Activated T-helper 2 cell treated with anti-CD3 and anti-CD28 coated beads, Interferon-gamma antibody, Interleukin-2, Interleukin-4, amounts not matched to agents 10 μg/mL and 5 μg/mL and 100 μg/mL, durations not matched to agents 14 hours and 24 hours and 36 hours (primary cell): ENCODE measurements at regions of chr6 and their contacts with region 1.

Region 1: DNA sequence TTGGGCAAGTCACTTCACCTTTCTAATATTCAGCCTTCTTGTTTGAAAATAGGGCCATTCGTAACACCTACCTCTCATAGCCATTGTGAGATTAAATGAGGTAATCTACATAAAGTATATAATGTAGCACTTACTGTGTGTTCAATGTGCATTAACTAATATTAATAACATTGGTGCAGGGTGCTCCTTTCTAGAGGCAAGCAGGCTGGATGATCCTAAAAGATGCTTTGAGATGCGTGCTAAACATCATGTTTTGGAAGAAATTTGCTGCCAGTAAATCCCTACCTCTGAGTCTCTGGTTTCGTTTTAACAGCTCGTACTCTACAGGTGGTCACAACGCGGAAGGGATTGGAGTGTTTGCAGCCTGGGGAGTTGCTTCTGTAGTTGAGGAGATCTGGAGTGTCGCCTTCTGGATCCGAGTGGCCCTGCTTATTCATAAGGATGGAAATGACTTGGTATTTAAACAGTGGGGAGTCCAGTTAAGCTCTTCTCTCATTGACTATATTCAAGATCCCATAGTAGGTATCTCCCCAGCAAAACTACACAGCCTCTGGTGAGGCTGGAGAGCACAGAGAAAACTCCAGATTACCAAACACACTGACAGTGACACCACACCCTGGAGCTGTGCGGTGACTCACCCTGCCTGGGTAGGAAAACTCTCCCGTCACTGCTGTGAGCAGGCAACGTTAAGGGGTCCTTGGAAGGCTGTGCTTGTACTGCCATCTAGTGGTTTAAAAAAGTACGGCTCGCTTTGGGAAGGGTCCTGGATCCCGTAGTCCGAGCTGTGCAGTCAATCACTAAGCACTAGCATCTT is 107.9 kb downstream of the MAP3K7 start:
- DNase-seq: peak; percentile 75
- H3K4me3 Mint-ChIP-seq: peak overlapping the region; percentile 17
- H3K27ac Mint-ChIP-seq: peak overlapping the region; percentile 67
- H3K4me1 Mint-ChIP-seq: peaks cover 58% of the 10 kb centered on the region
- H3K27me3 Mint-ChIP-seq: no peaks in the 10 kb centered on the region

Region 2: DNA sequence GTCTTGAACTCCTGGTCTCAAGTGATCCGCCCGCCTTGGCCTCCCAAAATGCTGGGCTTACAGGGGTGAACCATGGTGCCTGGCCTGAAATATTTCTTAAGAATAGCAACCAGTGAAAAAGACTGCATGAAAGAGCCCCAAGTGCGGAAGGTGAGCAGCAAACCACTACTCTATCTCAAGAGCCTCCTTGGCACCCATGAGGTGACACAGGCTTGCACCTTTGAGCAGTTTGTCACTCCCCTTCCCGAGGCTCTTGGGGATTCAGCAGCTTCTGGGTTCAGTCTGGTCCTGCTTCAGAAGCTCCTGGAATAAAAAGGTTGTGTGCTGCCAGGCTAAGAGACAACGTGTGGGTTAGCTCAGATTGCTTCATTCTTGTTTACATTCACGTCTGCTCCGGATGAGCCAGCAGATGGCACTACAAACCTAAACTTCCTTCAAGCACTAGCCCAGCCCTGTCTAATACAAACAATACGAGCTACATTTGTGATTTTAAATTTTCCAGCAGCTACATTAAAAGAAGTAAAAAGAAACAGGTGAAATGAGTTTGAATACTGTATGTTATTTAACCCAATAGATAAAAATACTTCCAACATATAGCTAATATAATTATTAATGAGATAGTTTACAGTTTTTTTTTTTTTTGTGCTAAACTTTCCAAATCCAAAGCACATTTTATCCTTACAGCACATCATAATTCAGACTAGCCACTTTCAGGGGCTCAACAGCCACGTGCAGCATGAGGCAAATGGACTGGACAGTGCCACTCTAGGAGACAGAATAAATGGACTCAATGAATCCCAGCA is 538.6 kb before region 1 on chr6:
- intact Hi-C with region 1: loop called (anchors 1 kb)
- DNase-seq: peak; percentile 59
- H3K4me3 Mint-ChIP-seq: no peak overlapping the region
- H3K27ac Mint-ChIP-seq: no peak overlapping the region
- H3K4me1 Mint-ChIP-seq: peaks cover 38% of the 10 kb centered on the region
- H3K27me3 Mint-ChIP-seq: no peaks in the 10 kb centered on the region

Region 3: GRCh38 chr6:90025523-90026061 is 453.4 kb before region 1 on chr6:
- intact Hi-C with region 1: loop called (anchors 5 kb)
- DNase-seq: no peak
- H3K4me3 Mint-ChIP-seq: peak overlapping the region; percentile 72
- H3K27ac Mint-ChIP-seq: peak overlapping the region; percentile 92
- H3K4me1 Mint-ChIP-seq: peaks cover 71% of the 10 kb centered on the region
- H3K27me3 Mint-ChIP-seq: no peaks in the 10 kb centered on the region

Region 4: DNA sequence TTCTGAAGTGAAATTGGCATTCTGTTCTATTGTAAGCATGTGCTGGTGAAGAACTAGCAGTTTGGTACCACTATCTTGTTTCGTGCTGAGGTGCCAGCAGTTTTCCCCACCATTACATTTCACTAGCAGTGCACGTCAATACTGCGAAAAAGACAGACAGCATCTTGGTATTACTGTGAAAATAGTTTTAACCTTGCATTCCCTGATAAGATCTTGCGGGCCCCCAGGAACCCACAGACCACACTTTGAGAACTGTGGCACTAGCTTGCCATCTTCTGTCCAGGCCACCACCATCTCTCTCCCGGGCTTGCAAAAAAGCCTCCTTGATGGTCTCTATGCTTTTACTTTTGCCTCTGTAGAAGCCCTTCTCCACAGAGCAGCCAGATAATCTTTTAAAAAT is 368.0 kb before region 1 on chr6:
- intact Hi-C with region 1: loop called (anchors 2 kb)
- DNase-seq: peak; percentile 76
- H3K4me3 Mint-ChIP-seq: peak overlapping the region; percentile 0
- H3K27ac Mint-ChIP-seq: peak overlapping the region; percentile 68
- H3K4me1 Mint-ChIP-seq: peaks cover 69% of the 10 kb centered on the region
- H3K27me3 Mint-ChIP-seq: no peaks in the 10 kb centered on the region

Region 5: DNA sequence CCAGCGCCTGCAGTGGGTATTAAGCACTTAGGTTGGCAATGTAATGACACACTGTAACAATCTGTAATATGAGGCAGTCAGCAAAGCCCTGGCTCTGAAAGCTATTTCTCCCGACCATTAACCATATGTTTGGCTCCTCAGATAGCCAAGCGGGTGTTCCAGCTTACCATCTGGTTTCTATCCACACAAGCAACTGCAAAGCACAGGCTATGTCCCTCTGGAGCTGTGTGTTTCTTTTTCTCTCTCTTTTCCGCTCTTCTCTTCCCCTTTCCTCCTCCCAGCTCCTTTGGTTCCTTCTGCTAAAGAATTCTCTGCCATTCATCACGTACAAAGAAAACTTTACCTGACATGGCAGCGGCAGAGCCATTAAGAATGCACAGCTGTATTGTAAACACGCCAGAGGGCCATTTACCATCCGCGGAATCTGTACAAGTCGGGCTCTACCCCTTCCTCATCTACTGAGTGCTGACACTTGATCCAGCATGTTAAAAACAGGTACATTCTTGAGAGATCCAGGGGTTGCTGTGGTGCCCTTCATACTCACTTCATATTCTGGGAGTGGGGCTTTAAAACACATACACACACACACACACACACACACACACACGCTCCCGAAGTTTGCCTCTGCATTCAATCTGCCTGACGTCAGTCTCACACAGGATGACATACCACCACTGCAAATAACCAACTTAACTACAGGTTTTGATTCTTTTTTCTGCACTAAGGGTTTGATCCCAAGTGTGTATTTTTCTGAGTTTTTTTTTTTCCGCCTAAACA is 259.6 kb before region 1 on chr6:
- intact Hi-C with region 1: no loop called
- DNase-seq: no peak
- H3K4me3 Mint-ChIP-seq: no peak overlapping the region
- H3K27ac Mint-ChIP-seq: no peak overlapping the region
- H3K4me1 Mint-ChIP-seq: peaks cover 25% of the 10 kb centered on the region
- H3K27me3 Mint-ChIP-seq: no peaks in the 10 kb centered on the region

Region 6: DNA sequence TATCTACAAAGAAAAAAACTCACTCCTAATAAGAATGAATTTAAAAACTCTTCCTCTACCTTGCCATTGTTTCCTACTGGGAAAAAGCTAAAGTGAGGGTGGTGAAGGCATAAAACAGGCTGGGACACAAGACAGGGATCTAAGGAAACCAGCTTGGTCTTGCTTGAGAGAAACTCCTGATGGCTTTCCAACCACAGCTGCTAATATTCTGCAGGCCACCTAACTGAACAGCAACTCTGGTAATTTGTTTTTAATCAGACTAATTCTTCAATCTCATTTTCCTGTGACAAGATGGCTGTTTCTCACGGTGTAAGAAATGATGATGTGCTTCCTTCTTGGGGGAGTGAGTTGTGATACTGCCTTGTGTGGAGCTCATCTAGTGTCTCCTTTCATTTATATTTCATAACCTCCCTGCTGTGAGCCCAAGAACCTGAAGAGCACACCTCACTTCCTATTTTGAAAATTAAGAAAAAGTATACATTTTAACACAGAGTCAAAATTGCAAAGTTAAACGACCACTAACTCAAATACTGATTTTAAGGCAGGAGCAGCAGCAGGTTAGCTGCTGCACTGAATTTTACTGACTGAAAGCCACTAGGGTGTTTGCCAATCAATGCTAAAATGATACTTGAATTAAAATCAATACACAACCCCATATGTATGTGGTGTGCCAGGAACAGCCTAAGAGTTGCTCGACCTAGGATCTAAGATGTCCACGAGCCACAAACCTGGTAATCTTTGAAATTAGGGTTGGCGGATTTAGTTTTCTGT is 240.3 kb before region 1 on chr6:
- intact Hi-C with region 1: loop called (anchors 2 kb)
- DNase-seq: no peak
- H3K4me3 Mint-ChIP-seq: no peak overlapping the region
- H3K27ac Mint-ChIP-seq: peak overlapping the region; percentile 70
- H3K4me1 Mint-ChIP-seq: peaks cover 68% of the 10 kb centered on the region
- H3K27me3 Mint-ChIP-seq: no peaks in the 10 kb centered on the region

Region 7: GRCh38 chr6:90369024-90369519 is 109.9 kb before region 1 on chr6:
- intact Hi-C with region 1: loop called (anchors 1 kb)
- DNase-seq: peak; percentile 29
- H3K4me3 Mint-ChIP-seq: no peak overlapping the region
- H3K27ac Mint-ChIP-seq: peak overlapping the region; percentile 62
- H3K4me1 Mint-ChIP-seq: peaks cover 30% of the 10 kb centered on the region
- H3K27me3 Mint-ChIP-seq: peaks cover 7% of the 10 kb centered on the region

Region 8: DNA sequence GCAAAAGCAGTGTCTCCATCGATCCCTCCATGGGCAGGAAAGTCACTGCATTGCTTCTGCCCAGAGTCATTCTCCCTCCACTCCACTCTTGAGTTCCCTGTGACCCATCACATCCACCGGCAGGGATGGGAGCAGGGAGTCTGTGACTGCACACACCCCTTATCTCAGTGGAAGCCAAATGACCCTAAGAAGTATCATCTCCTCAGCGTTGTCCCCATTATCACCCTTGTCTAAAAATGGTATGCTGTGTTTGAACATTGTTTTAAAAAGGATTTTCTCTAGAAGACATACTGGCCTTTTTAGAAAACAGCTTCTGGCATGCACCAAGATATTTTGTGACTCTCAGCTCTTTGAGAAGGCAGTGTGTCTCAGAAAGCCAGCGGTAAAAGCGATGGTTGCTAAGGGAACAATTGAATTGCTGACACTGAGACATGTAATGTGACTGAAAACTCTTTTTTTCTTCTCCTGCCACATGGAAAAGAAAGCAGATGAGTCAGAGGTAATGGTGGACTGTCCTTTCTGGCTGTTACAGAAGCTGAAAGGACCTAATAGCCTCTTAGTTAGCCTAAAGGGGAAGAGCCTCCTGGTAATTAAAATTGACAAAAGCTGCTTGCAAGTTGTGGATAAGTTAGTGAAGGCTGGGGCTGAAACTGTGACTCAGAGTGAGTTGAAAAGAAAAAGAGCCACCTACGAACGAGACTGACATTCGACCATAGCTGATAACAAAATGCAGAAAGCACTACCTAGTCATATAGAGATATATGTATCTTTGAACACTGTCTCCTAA is 12.6 kb before region 1 on chr6:
- intact Hi-C with region 1: loop called (anchors 1 kb)
- DNase-seq: no peak
- H3K4me3 Mint-ChIP-seq: peak overlapping the region; percentile 37
- H3K27ac Mint-ChIP-seq: peak overlapping the region; percentile 94
- H3K4me1 Mint-ChIP-seq: peaks cover 93% of the 10 kb centered on the region
- H3K27me3 Mint-ChIP-seq: no peaks in the 10 kb centered on the region